Right ventricle myocardium inferior (tissue), 1 donor: ENCODE measurements at regions of chrX and their contacts with region 1.

Region 1: GRCh38 chrX:45515262-45516215 is 314.9 kb upstream of the DIPK2B start:
- DNase-seq: no peak
- ATAC-seq: peak; percentile 85

Region 2: DNA sequence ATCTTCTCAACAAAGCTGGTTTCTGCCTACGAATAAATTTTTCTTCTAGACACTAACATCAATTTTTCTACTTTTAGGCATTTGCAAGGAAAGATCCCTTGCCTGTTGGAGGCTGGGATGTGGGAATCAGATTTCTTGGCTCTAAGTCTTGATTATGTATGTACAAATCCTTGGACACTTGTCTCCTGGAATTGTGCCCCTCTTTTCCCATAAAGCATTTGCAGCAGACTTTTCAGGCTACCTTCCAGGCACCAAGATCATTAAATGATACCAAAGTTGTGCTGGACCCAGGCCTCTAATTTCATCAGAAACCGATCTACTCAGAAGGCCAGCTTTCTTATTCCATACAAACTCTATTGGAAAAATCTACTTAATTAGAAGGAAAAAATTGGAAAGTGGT is 24.6 kb after region 1 on chrX:
- intact Hi-C with region 1: no loop called
- DNase-seq: no peak
- ATAC-seq: no peak

Region 3: GRCh38 chrX:45843518-45843917 is 328.0 kb after region 1 on chrX:
- intact Hi-C with region 1: loop called (anchors 2 kb)
- DNase-seq: no peak
- ATAC-seq: no peak

Region 4: GRCh38 chrX:46408553-46409407 is 893.2 kb after region 1 on chrX:
- intact Hi-C with region 1: loop called (anchors 10 kb)
- DNase-seq: no peak
- ATAC-seq: no peak